Activated CD4-positive, alpha-beta T cell treated with anti-CD3 and anti-CD28 coated beads, Interleukin-2, amount 10 ng/mL, durations not matched to agents 7 days and 5 days (primary cell): ENCODE measurements at regions of chr3 and their contacts with region 1.

Region 1: DNA sequence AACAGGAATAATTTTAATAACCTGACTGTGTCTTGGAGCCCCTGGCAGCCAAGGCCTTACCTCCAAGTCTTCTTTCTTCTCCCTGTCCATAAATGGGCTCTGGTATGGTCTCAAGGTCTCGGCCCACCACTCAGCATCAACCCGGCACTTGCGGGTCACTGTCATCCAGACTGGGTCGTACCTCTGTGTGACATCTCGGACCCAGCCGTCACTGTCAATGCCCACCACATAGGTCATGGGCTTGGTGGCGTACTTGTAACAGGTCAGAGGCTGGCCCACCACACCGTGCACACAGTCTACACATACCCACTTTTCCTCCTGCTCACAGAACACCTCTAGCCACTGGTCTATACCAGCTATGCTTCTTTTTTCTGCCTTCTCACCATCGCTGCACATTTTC is 20.4 kb downstream of the XPC start:
- DNase-seq: no peak
- H3K4me3 Mint-ChIP-seq: no peak overlapping the region
- H3K27ac Mint-ChIP-seq: no peak overlapping the region
- H3K4me1 Mint-ChIP-seq: peaks cover 2% of the 10 kb centered on the region
- H3K27me3 Mint-ChIP-seq: no peaks in the 10 kb centered on the region

Region 2: DNA sequence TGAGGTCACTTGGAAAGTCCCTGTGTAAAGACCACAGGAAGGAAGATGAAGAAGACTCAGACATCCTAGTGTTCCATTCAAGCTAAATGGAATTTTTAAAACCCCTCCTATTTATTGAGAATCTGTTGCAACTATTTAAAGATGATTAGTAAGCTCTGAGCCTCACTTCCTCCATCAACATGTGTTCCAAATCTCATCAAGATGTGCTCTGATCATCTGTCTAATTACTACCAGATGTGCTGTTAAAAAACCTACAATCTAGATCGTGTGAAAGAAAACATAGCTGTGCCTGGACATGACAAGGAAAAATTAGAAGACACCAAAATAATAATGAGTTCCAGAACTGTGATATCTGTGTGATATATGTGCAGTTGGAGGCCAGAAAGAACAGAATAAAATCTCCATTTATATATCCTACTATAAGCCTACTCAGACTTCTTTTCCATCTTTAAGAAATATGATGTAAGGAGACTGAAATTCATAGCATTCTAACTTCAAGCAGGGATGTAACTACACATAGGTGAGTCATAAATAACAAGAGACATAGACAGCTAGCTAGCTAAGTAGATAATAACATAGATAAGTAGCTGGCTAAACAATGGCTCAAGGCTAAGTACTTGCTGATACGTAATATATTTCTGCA is 12.7 kb after region 1 on chr3:
- CTCF ChIA-PET with region 1: interaction called, 13 read pairs
- POLR2A ChIA-PET with region 1: no interaction called
- DNase-seq: no peak
- H3K4me3 Mint-ChIP-seq: no peak overlapping the region
- H3K27ac Mint-ChIP-seq: peak overlapping the region; percentile 21
- H3K4me1 Mint-ChIP-seq: peaks cover 34% of the 10 kb centered on the region
- H3K27me3 Mint-ChIP-seq: no peaks in the 10 kb centered on the region